ENCODE measurements at regions of chr2 and their contacts with region 1.

Region 1: DNA sequence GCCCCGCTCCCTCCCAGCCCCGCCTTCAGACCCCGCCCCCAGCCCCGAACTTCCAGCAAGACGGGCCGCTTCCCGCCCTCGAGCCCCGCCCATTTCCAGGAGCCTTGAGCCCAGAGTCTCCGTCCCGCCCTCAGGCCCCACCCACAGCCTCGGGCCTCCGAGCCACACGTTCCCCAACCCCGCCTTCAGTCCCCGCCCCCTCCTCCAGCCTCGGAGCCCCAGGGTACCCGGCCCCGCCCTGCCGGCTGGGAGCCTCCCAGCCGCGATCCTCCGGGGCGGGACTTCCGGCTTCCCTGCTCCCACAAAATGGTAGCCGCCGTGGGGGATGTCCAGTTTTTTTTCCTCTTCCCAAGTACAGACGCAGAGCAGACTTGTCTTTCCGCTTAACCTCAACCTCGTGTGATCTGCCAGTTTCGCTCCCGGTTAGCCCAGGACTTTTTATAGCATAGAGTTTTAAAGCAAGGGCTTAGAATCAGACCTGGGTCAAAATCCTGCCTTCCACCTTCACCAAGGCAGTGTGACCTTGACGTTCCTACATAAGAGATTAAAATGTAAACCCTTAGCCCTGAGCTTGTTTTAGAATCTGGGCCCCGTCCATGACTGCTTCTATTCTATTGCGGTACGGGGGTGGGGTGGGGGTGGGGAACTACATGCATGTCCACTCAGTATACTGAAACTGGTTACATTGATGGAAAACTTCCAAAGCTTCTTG is 435 bp upstream of the GPR155 start:
- DNase-seq: peak; percentile 84 to 97 (median 95)
- H3K4me3 ChIP-seq: peak overlapping the region; percentile 87 to 97 (median 92)
- H3K4me3 Mint-ChIP-seq: peak overlapping the region; percentile 94 to 97
- H3K27ac ChIP-seq: peak overlapping the region; percentile 15 to 83
- H3K27ac Mint-ChIP-seq: peak overlapping the region; percentile 89 to 97 (median 93)
- H3K4me1 ChIP-seq: peaks cover 7 to 13% of the 10 kb centered on the region in 2 donors
- H3K4me1 Mint-ChIP-seq: peaks cover 30% of the 10 kb centered on the region
- H3K27me3 ChIP-seq: peaks cover 0 to 3% of the 10 kb centered on the region in 2 donors
- H3K27me3 Mint-ChIP-seq: peaks cover 3 to 21% (median 14%) of the 10 kb centered on the region in 3 donors
- CTCF ChIP-seq: no peak

Region 2: DNA sequence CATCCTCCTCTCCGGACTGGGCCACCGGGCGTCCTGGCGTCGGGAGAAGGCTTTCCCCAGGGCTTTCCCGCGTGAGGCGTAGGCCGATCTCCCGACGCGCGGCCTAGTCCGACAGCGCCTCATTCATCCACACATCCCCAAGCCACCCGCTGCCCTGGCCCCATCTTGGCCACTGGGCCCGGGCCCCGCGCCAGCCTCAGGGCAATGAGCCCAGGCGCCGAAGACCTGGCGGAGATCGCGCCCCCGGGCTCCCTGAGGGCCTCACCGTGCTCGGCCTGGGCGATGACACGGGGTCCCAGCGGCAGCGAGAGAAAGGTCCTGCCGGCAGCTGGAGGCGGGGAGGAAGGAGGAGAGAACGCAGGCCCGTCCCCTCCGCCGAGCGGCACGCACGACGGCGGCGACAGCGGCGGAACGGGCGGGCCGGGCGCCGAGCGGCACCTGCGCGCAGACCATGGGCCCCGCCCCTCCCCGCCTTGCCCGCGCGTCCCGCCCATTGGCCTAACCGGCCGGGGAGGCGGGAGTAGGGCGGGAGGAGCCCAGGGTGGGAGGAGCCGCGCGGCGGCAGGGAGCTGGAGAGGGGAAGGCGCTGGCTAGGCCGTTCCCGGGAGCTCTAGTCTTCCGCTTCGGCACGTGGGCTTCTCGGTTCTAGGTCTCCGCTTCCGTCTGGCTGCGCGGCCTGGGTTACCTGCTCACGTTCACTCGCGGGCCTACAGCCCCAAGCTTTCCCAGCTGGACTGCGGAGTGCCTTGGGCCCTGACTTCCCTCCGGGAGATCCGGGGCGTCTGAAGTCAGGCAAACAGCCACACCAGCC is 238.9 kb before region 1 on chr2 and contains the start of gene OLA1:
- intact Hi-C with region 1: no loop called
- DNase-seq: peak; percentile 88 to 91 (median 91)
- H3K4me3 ChIP-seq: peak within 1 kb of the TSS; percentile 74 to 84 (median 81)
- H3K4me3 Mint-ChIP-seq: peak within 1 kb of the TSS; percentile 83 to 90
- H3K27ac ChIP-seq: peak within 1 kb of the TSS; percentile 67 to 78
- H3K27ac Mint-ChIP-seq: peak within 1 kb of the TSS; percentile 70 to 90 (median 79)
- H3K4me1 ChIP-seq: peaks cover 18 to 20% of the 10 kb centered on the region in 2 donors
- H3K4me1 Mint-ChIP-seq: peaks cover 17% of the 10 kb centered on the region
- H3K27me3 ChIP-seq: no peaks in the 10 kb centered on the region
- H3K27me3 Mint-ChIP-seq: peaks cover 1 to 2% (median 2%) of the 10 kb centered on the region in 3 donors
- CTCF ChIP-seq: no peak
- polyA plus RNA-seq, gene OLA1: 24.9 to 72.3 (median 71.9) TPM

Region 3: GRCh38 chr2:174461221-174461620 is 26.0 kb before region 1 on chr2:
- intact Hi-C with region 1: no loop called
- DNase-seq: no peak
- H3K4me3 ChIP-seq: no peak overlapping the region
- H3K4me3 Mint-ChIP-seq: no peak overlapping the region
- H3K27ac ChIP-seq: no peak overlapping the region
- H3K27ac Mint-ChIP-seq: no peak overlapping the region
- H3K4me1 ChIP-seq: no peaks in the 10 kb centered on the region
- H3K4me1 Mint-ChIP-seq: peaks cover 2% of the 10 kb centered on the region
- H3K27me3 ChIP-seq: no peaks in the 10 kb centered on the region
- H3K27me3 Mint-ChIP-seq: no peaks in the 10 kb centered on the region
- CTCF ChIP-seq: no peak

Region 4: DNA sequence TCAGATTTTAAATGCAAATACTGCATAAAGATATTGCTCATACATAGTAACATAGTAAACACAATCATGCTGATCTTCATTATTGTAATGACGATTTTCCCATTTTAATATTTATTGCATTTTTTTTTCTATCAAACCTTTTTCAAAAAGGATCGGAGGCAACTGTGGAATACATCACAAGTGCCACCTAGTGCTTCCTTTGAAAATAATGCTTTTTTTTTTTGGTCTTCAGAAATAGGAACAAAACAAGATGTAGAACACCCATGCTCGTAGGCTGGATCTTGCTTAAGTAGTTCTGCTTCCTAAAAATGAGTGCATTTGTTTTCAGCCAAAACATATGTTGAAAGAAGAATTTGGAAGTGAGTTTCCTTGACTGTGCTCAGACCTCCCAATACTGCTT is 35.3 kb after region 1 on chr2:
- intact Hi-C with region 1: loop called in 1 of 2 experiments (anchors 5 kb)
- DNase-seq: peak; percentile 54 to 76 (median 65)
- H3K4me3 ChIP-seq: peak overlapping the region in 1 of 3 experiments; percentile 6
- H3K4me3 Mint-ChIP-seq: peak overlapping the region in 1 of 2 donors; percentile 44
- H3K27ac ChIP-seq: peak overlapping the region; percentile 82 to 91
- H3K27ac Mint-ChIP-seq: peak overlapping the region; percentile 90 to 98 (median 95)
- H3K4me1 ChIP-seq: peaks cover 32 to 47% of the 10 kb centered on the region in 2 donors
- H3K4me1 Mint-ChIP-seq: peaks cover 59% of the 10 kb centered on the region
- H3K27me3 ChIP-seq: no peaks in the 10 kb centered on the region
- H3K27me3 Mint-ChIP-seq: peaks cover 6 to 12% (median 12%) of the 10 kb centered on the region in 3 donors
- CTCF ChIP-seq: peak; percentile 40

Region 5: DNA sequence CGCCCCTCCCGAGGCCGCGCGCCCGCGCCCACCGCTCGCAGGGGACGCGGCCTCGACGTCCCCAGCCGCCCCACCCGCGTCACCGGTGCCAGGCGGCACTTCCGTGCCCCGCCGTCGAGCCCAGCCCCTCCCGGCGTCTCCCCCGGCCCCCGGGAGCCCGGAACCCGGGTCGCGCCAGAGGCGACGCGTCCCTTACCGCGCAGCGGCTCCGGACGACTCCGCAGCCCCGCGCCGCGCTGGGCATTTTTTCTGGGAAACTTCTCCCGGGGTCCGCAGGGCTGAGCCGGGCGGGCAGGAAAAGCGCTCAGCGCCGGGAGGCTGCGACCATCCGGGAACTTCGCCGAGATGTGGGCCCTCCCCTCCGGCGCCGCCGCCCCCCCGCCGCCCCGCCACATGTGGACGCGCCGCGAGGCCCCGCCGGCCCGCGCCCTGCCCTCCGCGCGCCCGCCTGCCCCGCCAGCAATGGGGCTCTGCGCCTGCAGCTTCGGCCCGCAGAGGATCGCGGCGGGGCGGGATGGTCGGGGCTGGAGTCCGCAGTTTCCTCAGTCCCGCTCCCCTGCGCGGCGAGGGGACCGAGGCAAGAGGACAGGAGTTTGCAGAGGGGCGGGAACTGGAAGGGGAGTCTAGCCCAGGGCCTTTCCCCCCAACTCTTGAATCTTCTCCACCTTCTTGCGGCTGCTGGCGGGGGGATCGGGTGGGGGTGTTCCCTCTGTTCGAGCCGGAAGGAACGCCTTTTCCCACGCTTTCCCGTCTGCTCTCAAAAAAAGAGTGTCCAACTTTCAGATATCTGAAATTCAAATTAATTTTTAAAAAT is 195.5 kb after region 1 on chr2:
- intact Hi-C with region 1: loop called in 1 of 2 experiments (anchors 10 kb)
- DNase-seq: peak in 1 of 3 donors; percentile 11
- H3K4me3 ChIP-seq: peak overlapping the region; percentile 50 to 88 (median 74)
- H3K4me3 Mint-ChIP-seq: peak overlapping the region; percentile 91 to 94
- H3K27ac ChIP-seq: peak overlapping the region in 1 of 2 donors; percentile 46
- H3K27ac Mint-ChIP-seq: peak overlapping the region in 4 of 7 donors; percentile 61 to 73 (median 67)
- H3K4me1 ChIP-seq: peaks cover 20 to 35% of the 10 kb centered on the region in 2 donors
- H3K4me1 Mint-ChIP-seq: peaks cover 40% of the 10 kb centered on the region
- H3K27me3 ChIP-seq: no peaks in the 10 kb centered on the region
- H3K27me3 Mint-ChIP-seq: peaks cover 10 to 17% (median 14%) of the 10 kb centered on the region in 3 donors
- CTCF ChIP-seq: no peak

Measured in CD14-positive monocyte (primary cell).